ENCODE measurements at regions of chr20 and their contacts with region 1.

Region 1: DNA sequence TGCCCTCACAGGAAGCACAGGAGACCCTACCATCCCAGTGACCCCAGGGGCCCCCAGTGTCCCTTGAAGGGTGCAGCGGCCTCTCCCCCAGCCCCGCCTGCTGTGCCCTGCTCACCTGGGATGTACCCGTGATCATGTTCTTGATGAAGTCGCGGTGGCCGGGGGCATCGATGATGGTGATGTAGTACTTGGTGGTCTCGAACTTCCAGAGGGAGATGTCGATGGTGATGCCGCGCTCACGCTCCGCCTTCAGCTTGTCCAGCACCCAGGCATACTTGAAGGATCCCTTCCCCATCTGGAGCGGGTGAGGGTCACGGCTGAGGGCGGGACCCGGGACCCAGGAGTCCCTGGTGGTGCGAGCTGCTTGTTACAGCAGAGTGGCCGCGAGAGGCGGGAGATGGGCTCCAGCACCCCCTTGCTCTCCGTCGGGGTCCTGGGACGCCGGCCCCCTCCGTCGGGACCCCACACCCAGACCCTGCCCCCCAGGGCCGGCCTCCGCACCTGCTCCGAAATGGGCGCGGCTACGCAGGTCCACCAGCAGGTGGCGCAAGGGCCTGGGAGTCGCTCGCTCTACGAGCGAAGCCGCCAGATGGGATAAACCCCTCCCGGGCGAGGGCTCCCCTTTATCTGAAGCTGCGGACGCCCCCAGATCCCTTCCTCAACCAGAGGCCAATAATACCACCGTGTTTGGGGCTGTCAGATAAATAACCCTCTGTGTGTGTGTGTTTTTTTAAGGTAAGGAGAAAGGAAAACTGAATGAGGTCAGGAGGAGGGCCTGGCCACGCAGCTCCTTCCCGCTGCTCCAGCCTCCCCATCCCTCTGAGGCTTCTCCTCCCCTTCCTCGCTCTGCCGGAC is 2.9 kb downstream of the EEF1A2 start:
- DNase-seq: peak; percentile 69 to 89
- ATAC-seq: peak; percentile 21 to 48 (median 33)
- H3K4me3 ChIP-seq: peak overlapping the region; percentile 75
- H3K27ac ChIP-seq: peak overlapping the region; percentile 94
- H3K4me1 ChIP-seq: peaks cover 35% of the 10 kb centered on the region
- H3K27me3 ChIP-seq: peaks cover 0 to 2% (median 0%) of the 10 kb centered on the region in 3 donors
- CTCF ChIP-seq: peak; percentile 92

Region 2: DNA sequence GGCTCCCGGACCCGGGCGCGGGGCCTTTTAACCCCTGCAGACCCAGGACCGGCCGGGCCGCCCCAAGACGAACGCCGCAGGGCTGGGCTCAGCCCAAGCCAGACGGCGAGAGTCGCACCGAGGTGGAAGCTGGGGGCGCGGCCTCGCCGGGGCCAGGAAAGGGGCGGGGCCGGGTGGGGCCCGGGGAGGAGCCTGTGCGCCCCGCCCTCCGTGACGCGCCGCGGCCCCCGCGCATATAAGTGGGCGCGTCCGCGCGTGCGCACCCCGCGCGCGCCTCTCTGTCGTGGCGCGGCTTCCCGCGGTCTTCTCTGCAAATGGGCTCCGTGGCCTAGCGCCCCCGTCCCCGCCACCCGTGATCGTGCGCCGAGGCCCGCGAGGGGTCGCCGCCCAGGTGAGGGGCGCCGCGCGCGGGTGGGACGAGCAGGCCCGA is 24.6 kb after region 1 on chr20 and contains the start of gene PPDPF:
- intact Hi-C with region 1: loop called (anchors 1 to 2 kb)
- DNase-seq: peak; percentile 84 to 91
- ATAC-seq: peak; percentile 91 to 94 (median 92)
- H3K4me3 ChIP-seq: peak within 1 kb of the TSS; percentile 80
- H3K27ac ChIP-seq: peak within 1 kb of the TSS; percentile 87
- H3K4me1 ChIP-seq: peaks cover 19% of the 10 kb centered on the region
- H3K27me3 ChIP-seq: no peaks in the 10 kb centered on the region
- CTCF ChIP-seq: no peak
- total RNA-seq, gene PPDPF: 130 to 198 (median 155) TPM

Measured in psoas muscle (tissue), 8 donors.